ENCODE measurements at regions of chr19 and their contacts with region 1.

Region 1: GRCh38 chr19:3304871-3305423 is 61.4 kb upstream of the NFIC start:
- DNase-seq: peak; percentile 58
- ATAC-seq: peak; percentile 47
- H3K4me3 ChIP-seq: 0 out of 6 replicates have a peak overlapping the region, but pooled peaks of 1 of the 3 experiments have one; percentile 6
- H3K27ac ChIP-seq: no peak overlapping the region
- H3K4me1 ChIP-seq: peaks cover 22% of the 10 kb centered on the region
- H3K27me3 ChIP-seq: no peaks in the 10 kb centered on the region; a peak in 1 of 5 replicates
- CTCF ChIP-seq: peak; percentile 83
- EP300 ChIP-seq: no peak
- POLR2A ChIP-seq: no peak
- RAD21 ChIP-seq: peak; percentile 43; the same call in 1 of the 2 replicates

Region 2: GRCh38 chr19:3471954-3472655 is 167.2 kb after region 1 on chr19:
- CTCF ChIA-PET with region 1: interaction called, 12 read pairs
- POLR2A ChIA-PET with region 1: no interaction called
- in situ Hi-C with region 1: no loop called
- intact Hi-C with region 1: no loop called
- DNase-seq: no peak
- ATAC-seq: peak; percentile 51
- H3K4me3 ChIP-seq: no peak overlapping the region
- H3K27ac ChIP-seq: no peak overlapping the region
- H3K4me1 ChIP-seq: peaks cover 12% of the 10 kb centered on the region
- H3K27me3 ChIP-seq: peaks cover 0 to 1% of the 10 kb centered on the region in 2 experiments; a peak in 1 of 5 replicates
- CTCF ChIP-seq: peak; percentile 84
- EP300 ChIP-seq: no peak
- POLR2A ChIP-seq: no peak
- RAD21 ChIP-seq: peak; percentile 72